Activated CD4-positive, alpha-beta T cell treated with anti-CD3 and anti-CD28 coated beads for 36 hours (primary cell): ENCODE measurements at regions of chr18 and their contacts with region 1.

Region 1: DNA sequence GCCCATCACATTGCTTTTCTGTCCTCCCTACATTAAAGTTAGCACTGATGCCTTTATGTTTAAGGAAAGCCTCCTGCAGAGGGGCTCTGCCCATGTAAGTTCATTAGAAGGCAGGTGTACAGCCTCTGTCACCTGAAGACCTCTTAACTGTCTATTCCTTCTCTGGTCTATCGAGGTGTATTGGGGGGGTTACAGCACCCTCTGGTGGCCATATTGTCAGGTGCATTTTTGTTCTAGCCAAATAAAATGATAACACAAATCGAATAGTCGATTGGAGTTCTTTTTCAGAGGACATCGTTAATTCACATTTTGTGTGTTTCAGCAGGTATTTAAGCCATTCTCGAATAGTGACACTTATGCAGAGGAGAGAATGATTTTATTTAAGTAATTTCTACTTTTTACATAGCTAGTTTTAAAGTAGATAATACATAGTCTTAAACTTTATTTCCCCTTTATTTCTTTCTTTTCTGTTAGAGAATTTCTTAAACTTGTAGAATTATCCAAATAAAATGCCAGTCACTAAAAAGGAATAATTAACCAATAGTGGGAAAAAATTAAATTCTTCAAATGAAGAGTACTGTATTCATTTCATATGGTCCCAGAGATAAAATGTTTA is 136.8 kb downstream of the NEDD4L start:
- DNase-seq: peak; percentile 77
- ATAC-seq: no peak
- H3K4me3 Mint-ChIP-seq: no peak overlapping the region
- H3K27ac Mint-ChIP-seq: no peak overlapping the region
- H3K4me1 Mint-ChIP-seq: no peaks in the 10 kb centered on the region
- H3K27me3 Mint-ChIP-seq: no peaks in the 10 kb centered on the region

Region 2: GRCh38 chr18:57881818-57882413 is 298.9 kb before region 1 on chr18:
- CTCF ChIA-PET with region 1: interaction called, 8 read pairs
- POLR2A ChIA-PET with region 1: no interaction called
- intact Hi-C with region 1: loop called (anchors 1 to 2 kb)
- DNase-seq: peak; percentile 74
- ATAC-seq: peak; percentile 90
- H3K4me3 Mint-ChIP-seq: no peak overlapping the region
- H3K27ac Mint-ChIP-seq: no peak overlapping the region
- H3K4me1 Mint-ChIP-seq: peaks cover 2% of the 10 kb centered on the region
- H3K27me3 Mint-ChIP-seq: peaks cover 13% of the 10 kb centered on the region

Region 3: GRCh38 chr18:58128381-58129374 is 52.2 kb before region 1 on chr18:
- CTCF ChIA-PET with region 1: no interaction called
- POLR2A ChIA-PET with region 1: no interaction called
- intact Hi-C with region 1: no loop called
- DNase-seq: no peak
- ATAC-seq: no peak
- H3K4me3 Mint-ChIP-seq: no peak overlapping the region
- H3K27ac Mint-ChIP-seq: no peak overlapping the region
- H3K4me1 Mint-ChIP-seq: no peaks in the 10 kb centered on the region
- H3K27me3 Mint-ChIP-seq: no peaks in the 10 kb centered on the region

Region 4: GRCh38 chr18:58195278-58195765 is 14.5 kb after region 1 on chr18:
- CTCF ChIA-PET with region 1: interaction called, 11 read pairs
- POLR2A ChIA-PET with region 1: no interaction called
- intact Hi-C with region 1: no loop called
- DNase-seq: peak; percentile 42
- ATAC-seq: peak; percentile 83
- H3K4me3 Mint-ChIP-seq: peak overlapping the region; percentile 56
- H3K27ac Mint-ChIP-seq: no peak overlapping the region
- H3K4me1 Mint-ChIP-seq: peaks cover 14% of the 10 kb centered on the region
- H3K27me3 Mint-ChIP-seq: peaks cover 14% of the 10 kb centered on the region